ENCODE measurements at regions of chr11 and their contacts with region 1.

Region 1: DNA sequence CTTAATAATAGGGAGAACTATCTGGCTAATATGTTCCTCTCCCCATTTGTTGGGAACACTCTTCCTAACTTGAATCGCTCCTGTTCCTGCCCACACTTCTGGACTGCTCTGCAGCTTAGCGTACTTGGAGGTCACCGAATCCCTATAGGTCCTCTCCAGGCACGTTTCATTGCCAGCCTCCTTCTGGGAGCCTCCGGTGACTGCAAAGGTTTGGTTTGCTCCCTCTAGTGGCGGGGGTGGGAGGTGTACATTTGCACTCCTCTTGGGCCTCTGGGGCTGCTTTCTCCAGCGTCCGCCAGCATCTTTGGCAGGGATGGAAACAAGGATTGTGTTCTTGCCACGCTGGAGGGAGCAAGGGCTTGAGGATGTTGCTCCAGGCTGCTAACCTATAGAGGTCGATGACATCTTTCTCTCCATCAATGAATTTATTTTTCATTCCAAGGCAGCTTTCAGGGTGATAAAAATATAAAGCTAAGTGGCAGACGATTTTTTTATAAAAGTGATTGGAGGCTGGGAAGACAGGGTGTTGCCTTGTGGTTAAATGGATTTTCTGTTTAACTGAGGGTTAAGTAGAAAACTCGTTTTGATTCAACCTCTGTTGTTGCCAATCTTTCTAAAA is 48.7 kb downstream of the TSPAN18 start:
- DNase-seq: peak; percentile 78 to 80
- ATAC-seq: peak; percentile 90 to 99
- H3K4me3 ChIP-seq: no peak overlapping the region
- H3K27ac ChIP-seq: no peak overlapping the region
- H3K4me1 ChIP-seq: no peaks in the 10 kb centered on the region
- CTCF ChIP-seq: peak; percentile 70
- EP300 ChIP-seq: no peak
- POLR2A ChIP-seq: no peak
- RAD21 ChIP-seq: peak; percentile 56 to 57

Region 2: GRCh38 chr11:44256673-44257291 is 518.7 kb before region 1 on chr11:
- CTCF ChIA-PET with region 1: no interaction called
- POLR2A ChIA-PET with region 1: no interaction called
- DNase-seq: no peak
- ATAC-seq: no peak
- H3K4me3 ChIP-seq: no peak overlapping the region
- H3K27ac ChIP-seq: no peak overlapping the region
- H3K4me1 ChIP-seq: no peaks in the 10 kb centered on the region
- CTCF ChIP-seq: no peak
- EP300 ChIP-seq: no peak
- POLR2A ChIP-seq: no peak
- RAD21 ChIP-seq: no peak

Region 3: GRCh38 chr11:44627911-44628729 is 147.4 kb before region 1 on chr11:
- CTCF ChIA-PET with region 1: interaction called, 25 read pairs
- POLR2A ChIA-PET with region 1: no interaction called
- DNase-seq: no peak
- ATAC-seq: peak in 1 of 2 experiments; percentile 43; a peak in 3 of 6 replicates
- H3K4me3 ChIP-seq: no peak overlapping the region
- H3K27ac ChIP-seq: no peak overlapping the region
- H3K4me1 ChIP-seq: no peaks in the 10 kb centered on the region
- CTCF ChIP-seq: no peak
- EP300 ChIP-seq: no peak
- POLR2A ChIP-seq: no peak
- RAD21 ChIP-seq: no peak

Region 4: GRCh38 chr11:44740967-44741366 is 34.5 kb before region 1 on chr11:
- CTCF ChIA-PET with region 1: interaction called, 16 read pairs
- POLR2A ChIA-PET with region 1: no interaction called
- DNase-seq: no peak
- ATAC-seq: no peak
- H3K4me3 ChIP-seq: no peak overlapping the region
- H3K27ac ChIP-seq: no peak overlapping the region
- H3K4me1 ChIP-seq: no peaks in the 10 kb centered on the region
- CTCF ChIP-seq: no peak
- EP300 ChIP-seq: no peak
- POLR2A ChIP-seq: no peak
- RAD21 ChIP-seq: no peak

Region 5: GRCh38 chr11:44785856-44786606 is 10.6 kb after region 1 on chr11:
- CTCF ChIA-PET with region 1: interaction called, 39 read pairs
- POLR2A ChIA-PET with region 1: no interaction called
- DNase-seq: peak; percentile 14 to 43
- ATAC-seq: peak; percentile 76 to 91; a peak in 5 of 6 replicates
- H3K4me3 ChIP-seq: no peak overlapping the region
- H3K27ac ChIP-seq: 0 out of 6 replicates have a peak overlapping the region, but pooled peaks of 1 of the 2 experiments have one; percentile 20
- H3K4me1 ChIP-seq: peaks cover 2% of the 10 kb centered on the region; the same call in 1 of the 3 replicates
- CTCF ChIP-seq: no peak; the same call in 2 of the 3 replicates
- EP300 ChIP-seq: no peak
- POLR2A ChIP-seq: no peak
- RAD21 ChIP-seq: peak in 1 of 2 experiments; percentile 43; a peak in 2 of 5 replicates

Region 6: GRCh38 chr11:44823006-44823405 is 47.5 kb after region 1 on chr11:
- CTCF ChIA-PET with region 1: interaction called, 21 read pairs
- POLR2A ChIA-PET with region 1: no interaction called
- DNase-seq: peak in 1 of 2 experiments; percentile 28
- ATAC-seq: peak; percentile 41 to 85; a peak in 3 of 6 replicates
- H3K4me3 ChIP-seq: no peak overlapping the region
- H3K27ac ChIP-seq: no peak overlapping the region
- H3K4me1 ChIP-seq: no peaks in the 10 kb centered on the region
- CTCF ChIP-seq: no peak
- EP300 ChIP-seq: no peak
- POLR2A ChIP-seq: no peak
- RAD21 ChIP-seq: peak in 1 of 2 experiments; percentile 24; a peak in 1 of 5 replicates